ENCODE measurements at regions of chr5 and their contacts with region 1.

Region 1: DNA sequence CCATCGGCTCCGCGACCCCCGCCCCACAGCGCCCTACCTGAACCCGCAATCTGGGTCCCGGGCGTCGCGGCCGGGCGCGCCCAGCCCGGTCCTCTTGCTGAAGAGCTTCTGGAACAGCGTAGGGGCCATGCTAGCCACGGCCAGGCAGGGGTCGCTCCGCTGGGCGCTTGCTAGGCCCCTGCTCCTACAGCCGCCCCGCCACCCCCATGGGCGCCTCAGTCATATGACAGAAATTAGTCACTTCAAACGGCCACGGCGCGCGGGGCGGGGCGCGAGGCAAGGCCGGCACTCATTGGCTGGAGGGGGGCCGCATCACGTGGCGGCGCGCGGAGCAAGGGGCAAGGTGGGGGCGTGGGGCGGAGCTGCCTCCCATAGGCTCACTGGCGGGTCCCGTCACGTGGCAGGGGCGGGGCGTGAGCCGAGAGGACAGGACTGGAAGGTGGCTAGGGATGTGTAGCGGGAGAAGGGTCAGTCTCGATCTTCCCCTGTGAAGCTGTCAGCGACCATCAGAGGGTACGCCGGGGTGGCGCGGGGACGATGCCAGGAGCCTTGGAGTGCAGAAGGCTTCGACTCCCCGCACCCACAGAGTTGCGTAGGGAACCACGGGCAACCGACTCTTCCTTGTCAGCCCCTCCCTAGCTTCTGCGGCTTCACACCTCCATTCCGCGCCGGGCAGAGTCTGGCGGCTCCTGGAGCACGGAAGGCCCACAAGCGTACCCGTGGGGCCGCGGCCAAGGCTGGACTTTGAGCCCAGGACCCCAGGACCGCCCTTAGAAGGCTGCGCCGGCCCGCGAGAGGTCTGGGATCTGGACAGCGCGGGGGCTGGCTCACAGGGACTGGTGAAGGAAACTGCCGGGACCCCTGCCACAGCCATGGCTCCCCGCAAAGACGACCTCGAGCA is at the start of gene FNIP1:
- DNase-seq: peak; percentile 100
- ATAC-seq: peak; percentile 100
- H3K4me3 ChIP-seq: peak within 1 kb of the TSS; percentile 69 to 97
- H3K27ac ChIP-seq: peak within 1 kb of the TSS; percentile 84
- H3K4me1 ChIP-seq: peaks cover 0 to 4% of the 10 kb centered on the region in 2 donors
- H3K27me3 ChIP-seq: no peaks in the 10 kb centered on the region
- total RNA-seq, gene FNIP1: 43.2 to 50.0 TPM

Region 2: DNA sequence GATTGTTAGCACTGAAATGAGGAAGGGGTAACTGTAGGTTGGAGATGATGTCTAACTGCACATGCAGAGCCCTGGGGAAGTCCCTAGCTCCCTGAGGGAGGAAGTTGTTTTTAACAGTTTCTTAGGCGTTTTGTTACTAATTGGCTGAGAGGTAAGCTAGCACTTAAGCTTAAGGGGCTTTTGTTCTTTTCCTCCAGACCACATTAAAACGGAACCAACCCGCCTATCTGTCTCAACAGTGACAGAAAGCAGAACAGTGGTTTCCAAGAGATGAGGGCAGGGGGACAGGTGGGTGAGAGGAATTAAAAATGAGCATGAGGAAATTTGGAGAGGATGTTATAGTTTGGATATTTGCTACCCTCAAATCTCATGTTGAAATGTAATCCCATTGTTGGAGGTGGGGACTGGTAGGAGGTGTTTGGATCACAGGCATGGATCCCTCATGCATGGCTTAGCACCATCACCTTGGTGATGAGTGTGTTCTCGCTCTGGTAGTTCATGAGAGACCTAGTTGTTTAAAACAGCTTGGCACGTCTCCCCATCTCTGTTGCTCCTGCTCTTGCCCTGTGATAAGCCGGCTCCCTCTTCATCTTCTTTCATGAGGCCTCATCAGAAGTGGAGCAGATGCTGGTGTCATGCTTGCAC is 587.4 kb before region 1 on chr5:
- intact Hi-C with region 1: no loop called
- DNase-seq: peak in 1 of 2 donors; percentile 48
- ATAC-seq: no peak
- H3K4me3 ChIP-seq: no peak overlapping the region
- H3K27ac ChIP-seq: no peak overlapping the region
- H3K4me1 ChIP-seq: no peaks in the 10 kb centered on the region
- H3K27me3 ChIP-seq: no peaks in the 10 kb centered on the region

Region 3: GRCh38 chr5:131634996-131635754 is 161.9 kb before region 1 on chr5 and contains the start of gene RAPGEF6:
- intact Hi-C with region 1: loop called (anchors 1 to 5 kb)
- DNase-seq: peak; percentile 98 to 99
- ATAC-seq: peak; percentile 99
- H3K4me3 ChIP-seq: peak within 1 kb of the TSS; percentile 57 to 85
- H3K27ac ChIP-seq: peak within 1 kb of the TSS; percentile 97 to 98
- H3K4me1 ChIP-seq: peaks cover 0 to 5% of the 10 kb centered on the region in 2 donors
- H3K27me3 ChIP-seq: no peaks in the 10 kb centered on the region
- total RNA-seq, gene RAPGEF6: 26.1 to 26.6 TPM

Region 4: DNA sequence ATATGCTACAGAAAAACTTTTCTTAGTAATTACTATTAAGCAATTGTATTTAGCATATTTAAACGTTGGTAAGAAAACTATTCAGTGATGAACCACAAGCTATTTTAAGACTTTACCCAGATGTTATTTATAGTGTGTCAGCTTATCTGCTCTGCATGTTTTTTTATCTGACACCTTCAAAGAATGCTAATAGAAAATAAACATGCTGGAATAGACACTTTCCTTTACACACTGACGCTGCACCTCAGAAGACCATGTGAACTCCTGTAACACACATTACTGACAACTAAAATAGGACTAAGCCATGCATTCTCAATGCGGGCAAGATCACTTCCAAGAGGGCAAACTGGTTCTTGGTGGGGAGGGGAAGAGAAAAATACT is 38.5 kb before region 1 on chr5:
- intact Hi-C with region 1: loop called in 1 of 2 experiments (anchors 5 kb)
- DNase-seq: no peak
- ATAC-seq: no peak
- H3K4me3 ChIP-seq: no peak overlapping the region
- H3K27ac ChIP-seq: no peak overlapping the region
- H3K4me1 ChIP-seq: peaks cover 4 to 17% of the 10 kb centered on the region in 2 donors
- H3K27me3 ChIP-seq: no peaks in the 10 kb centered on the region